ENCODE measurements at regions of chr15 and their contacts with region 1.

Region 1: DNA sequence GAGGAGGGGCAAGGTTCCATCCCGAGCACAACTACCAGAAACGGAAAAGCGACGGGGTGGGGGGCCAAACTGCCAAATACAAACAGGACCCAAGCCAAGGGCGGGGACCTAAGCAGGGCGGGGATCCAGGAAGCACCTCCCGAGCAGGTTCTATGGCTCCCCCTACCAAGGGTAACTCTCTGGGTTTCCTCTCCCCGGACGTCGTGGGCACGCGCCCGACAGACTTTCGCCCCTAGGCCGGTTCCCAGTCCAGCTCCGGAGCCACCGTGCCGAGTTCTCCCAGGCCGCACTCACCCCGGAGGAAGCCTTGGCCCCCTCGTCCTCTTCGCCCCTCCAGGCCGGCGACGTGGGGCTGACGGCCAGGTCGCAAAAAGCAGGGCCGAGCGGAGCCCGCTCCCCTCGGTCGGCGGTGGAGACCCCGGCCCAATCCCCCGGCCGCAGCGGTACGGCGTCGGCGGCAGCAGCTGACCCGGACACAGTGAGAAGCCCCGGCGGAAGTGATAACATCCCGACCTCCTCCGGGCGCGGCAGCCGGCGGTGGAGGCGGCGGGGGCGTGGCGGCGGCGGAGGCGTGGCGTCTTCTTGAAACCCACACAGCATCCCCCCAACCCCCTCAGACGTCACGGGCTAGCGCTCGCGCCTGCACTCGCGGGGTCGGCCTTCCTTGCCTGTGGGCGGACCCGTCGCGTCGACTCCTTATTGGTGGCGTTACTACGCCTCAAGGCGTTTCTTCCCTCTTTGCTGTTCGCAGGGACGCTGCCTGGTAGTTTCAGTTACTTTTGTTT is at the start of gene BNIP2:
- DNase-seq: peak; percentile 99
- H3K4me3 ChIP-seq: peak within 1 kb of the TSS; percentile 66 to 100 (median 100)
- H3K27ac ChIP-seq: peak within 1 kb of the TSS; percentile 100
- H3K4me1 ChIP-seq: peaks cover 43% of the 10 kb centered on the region
- H3K27me3 ChIP-seq: no peaks in the 10 kb centered on the region
- CTCF ChIP-seq: no peak
- POLR2A ChIP-seq: peak; percentile 90
- total RNA-seq, gene BNIP2: 90.1 and 99.2 TPM in 2 replicates

Region 2: DNA sequence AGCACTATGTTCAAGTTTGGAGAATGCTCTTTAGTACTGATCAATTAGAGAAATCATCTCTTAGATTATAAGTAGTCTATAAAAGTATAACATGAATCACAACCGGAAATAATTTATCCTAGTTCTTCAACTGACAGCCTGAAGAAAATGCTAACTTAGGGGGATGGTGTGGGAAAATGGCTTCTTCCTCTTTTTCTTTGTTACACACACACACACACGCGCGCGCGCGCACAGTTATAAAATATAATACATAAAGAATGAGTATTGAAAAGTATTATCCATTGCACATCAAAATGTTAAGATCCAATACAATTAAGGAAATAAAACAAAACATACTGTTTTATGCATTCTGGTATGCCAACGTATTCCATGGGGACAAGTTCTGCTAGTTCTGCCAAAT is 20.5 kb before region 1 on chr15:
- CTCF ChIA-PET with region 1: no interaction called
- POLR2A ChIA-PET with region 1: no interaction called
- dilution Hi-C with region 1: no loop called
- intact Hi-C with region 1: no loop called
- DNase-seq: no peak
- H3K4me3 ChIP-seq: no peak overlapping the region
- H3K27ac ChIP-seq: no peak overlapping the region
- H3K4me1 ChIP-seq: no peaks in the 10 kb centered on the region
- H3K27me3 ChIP-seq: no peaks in the 10 kb centered on the region
- CTCF ChIP-seq: no peak
- POLR2A ChIP-seq: no peak

Region 3: DNA sequence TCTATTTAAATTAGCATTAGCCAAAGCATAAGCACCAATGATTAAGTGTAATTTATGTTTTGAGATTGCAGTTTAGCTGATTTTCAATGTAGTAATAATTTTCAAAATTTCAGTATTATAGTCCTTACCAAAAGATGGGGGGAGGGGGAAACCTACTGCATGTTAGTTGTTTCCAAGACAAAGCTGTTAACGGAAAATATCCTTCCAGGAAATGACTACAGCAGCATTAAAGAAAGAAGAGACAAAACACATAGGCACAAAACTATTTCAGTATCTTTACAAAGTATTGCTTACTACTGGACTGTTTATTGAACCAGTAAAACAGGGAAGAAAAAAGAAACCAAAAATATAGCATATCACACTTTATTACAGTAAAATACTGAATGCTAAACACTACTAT is 10.4 kb before region 1 on chr15:
- CTCF ChIA-PET with region 1: interaction called, 4 read pairs
- POLR2A ChIA-PET with region 1: no interaction called
- dilution Hi-C with region 1: no loop called
- intact Hi-C with region 1: loop called (anchors 1 kb)
- DNase-seq: peak; percentile 81
- H3K4me3 ChIP-seq: peak overlapping the region in 1 of 3 experiments; percentile 37
- H3K27ac ChIP-seq: peak overlapping the region; percentile 91
- H3K4me1 ChIP-seq: peaks cover 24% of the 10 kb centered on the region
- H3K27me3 ChIP-seq: no peaks in the 10 kb centered on the region
- CTCF ChIP-seq: no peak
- POLR2A ChIP-seq: no peak

Region 4: GRCh38 chr15:59711451-59712243 is 22.6 kb after region 1 on chr15:
- CTCF ChIA-PET with region 1: interaction called, 15 read pairs
- POLR2A ChIA-PET with region 1: no interaction called
- dilution Hi-C with region 1: no loop called
- intact Hi-C with region 1: no loop called
- DNase-seq: no peak
- H3K4me3 ChIP-seq: no peak overlapping the region
- H3K27ac ChIP-seq: no peak overlapping the region
- H3K4me1 ChIP-seq: no peaks in the 10 kb centered on the region
- H3K27me3 ChIP-seq: peaks cover 0 to 4% of the 10 kb centered on the region in 2 experiments
- CTCF ChIP-seq: no peak
- POLR2A ChIP-seq: no peak

Region 5: DNA sequence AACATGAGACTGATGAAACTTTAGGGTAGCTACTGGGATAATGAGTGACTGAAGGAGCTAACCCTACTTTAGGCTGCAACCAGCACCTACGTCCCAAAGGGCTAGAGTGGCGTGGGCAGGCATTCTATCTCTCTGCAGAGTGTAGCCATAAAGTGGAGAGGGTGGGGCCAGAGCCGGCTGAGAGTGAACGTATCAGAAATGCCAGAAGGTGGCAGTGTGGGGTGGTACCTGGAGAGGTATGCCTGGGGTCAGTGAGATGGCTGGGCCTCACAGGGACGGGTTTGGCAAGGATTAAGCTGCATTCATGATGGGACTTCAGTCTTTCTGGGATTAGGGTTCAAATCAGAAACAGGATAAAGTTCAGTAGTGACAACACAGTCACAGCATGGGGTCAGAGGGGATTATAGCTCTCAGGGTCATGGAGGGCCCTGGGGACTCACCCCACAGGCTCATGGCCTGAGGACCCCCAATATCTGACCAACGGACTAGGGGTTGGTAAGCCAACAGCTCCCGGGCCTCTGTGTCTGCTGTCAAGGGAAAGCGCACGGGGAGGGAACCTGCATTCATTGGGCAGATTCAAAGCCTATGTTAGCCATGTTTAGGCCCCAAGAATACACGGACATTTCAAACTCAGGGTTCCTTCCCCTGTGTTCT is 228.6 kb after region 1 on chr15:
- CTCF ChIA-PET with region 1: interaction called, 6 read pairs
- POLR2A ChIA-PET with region 1: no interaction called
- dilution Hi-C with region 1: no loop called
- intact Hi-C with region 1: loop called (anchors 10 kb)
- DNase-seq: peak; percentile 44
- H3K4me3 ChIP-seq: no peak overlapping the region
- H3K27ac ChIP-seq: no peak overlapping the region
- H3K4me1 ChIP-seq: no peaks in the 10 kb centered on the region
- H3K27me3 ChIP-seq: peaks cover 4 to 7% of the 10 kb centered on the region in 2 experiments
- CTCF ChIP-seq: peak; percentile 44 to 57
- POLR2A ChIP-seq: no peak

Region 6: GRCh38 chr15:60179786-60180391 is 490.9 kb after region 1 on chr15:
- CTCF ChIA-PET with region 1: interaction called, 40 read pairs
- POLR2A ChIA-PET with region 1: no interaction called
- dilution Hi-C with region 1: no loop called
- intact Hi-C with region 1: loop called (anchors 1 kb)
- DNase-seq: peak; percentile 44
- H3K4me3 ChIP-seq: no peak overlapping the region
- H3K27ac ChIP-seq: no peak overlapping the region
- H3K4me1 ChIP-seq: no peaks in the 10 kb centered on the region
- H3K27me3 ChIP-seq: peaks cover 2 to 10% of the 10 kb centered on the region in 2 experiments
- CTCF ChIP-seq: peak; percentile 70 to 73
- POLR2A ChIP-seq: no peak

Region 7: DNA sequence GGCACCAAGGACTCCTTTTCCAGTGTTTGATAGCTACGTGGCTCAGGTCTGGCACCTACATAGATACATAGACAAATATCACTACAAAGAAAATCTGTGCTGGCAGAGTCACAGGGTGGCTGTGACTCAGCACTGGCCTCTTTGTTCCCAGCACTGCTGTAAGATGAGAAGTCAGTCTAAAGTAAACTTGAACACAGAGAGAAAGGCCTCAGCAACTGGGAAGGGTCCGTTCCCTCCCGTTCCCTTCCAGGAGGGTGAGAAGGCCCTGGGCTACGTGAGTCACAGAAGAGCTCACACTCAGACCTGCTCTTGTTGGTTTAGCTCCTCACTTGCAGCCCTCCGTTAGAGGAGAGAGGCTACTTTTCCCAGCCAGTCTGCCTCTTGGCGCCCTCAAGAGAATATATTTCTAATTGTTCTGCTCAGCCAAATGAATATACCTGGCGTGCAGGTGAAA is 685.6 kb after region 1 on chr15:
- CTCF ChIA-PET with region 1: no interaction called
- POLR2A ChIA-PET with region 1: no interaction called
- dilution Hi-C with region 1: no loop called
- intact Hi-C with region 1: loop called (anchors 2 kb)
- DNase-seq: peak; percentile 98
- H3K4me3 ChIP-seq: no peak overlapping the region
- H3K27ac ChIP-seq: peak overlapping the region; percentile 98
- H3K4me1 ChIP-seq: peaks cover 85% of the 10 kb centered on the region
- H3K27me3 ChIP-seq: no peaks in the 10 kb centered on the region
- CTCF ChIP-seq: no peak
- POLR2A ChIP-seq: peak; percentile 72

Region 8: DNA sequence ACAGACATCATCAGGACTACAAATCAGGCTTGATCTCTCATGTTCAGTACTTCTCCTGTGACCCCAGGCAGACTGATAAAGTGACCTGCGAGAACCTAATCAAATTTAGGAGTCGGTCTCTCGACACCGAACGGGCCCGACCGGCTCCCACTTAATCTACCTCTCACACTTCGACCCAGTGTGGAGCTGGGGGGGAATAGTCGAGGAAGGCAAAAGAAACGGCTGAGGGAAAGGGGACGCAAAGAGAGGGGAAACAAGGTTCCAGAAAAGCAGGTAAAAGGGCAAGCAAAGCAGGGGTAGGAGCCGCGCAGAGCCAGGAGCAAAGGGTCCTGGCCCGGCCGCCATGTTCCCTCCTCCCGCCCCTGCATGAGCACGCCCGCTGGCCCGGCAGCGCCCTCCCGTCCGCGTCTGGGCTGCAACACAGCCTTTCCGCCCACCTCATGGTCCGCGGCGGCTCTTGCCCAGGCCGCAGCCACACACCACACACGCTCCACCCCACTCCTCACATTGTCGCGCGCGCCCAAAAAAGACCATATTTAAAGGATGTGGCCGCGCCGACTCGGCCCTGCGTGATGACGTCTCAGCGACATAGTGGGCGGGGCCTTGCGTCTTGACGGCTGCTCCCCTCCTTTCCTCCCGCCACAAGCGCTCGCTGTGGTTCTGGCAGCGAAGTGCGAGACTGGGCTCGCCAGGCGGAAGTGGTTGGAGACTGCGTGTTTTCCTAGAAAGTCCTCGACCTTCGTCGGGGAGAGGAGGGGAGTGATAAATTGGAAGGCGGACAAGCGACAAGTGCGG is 789.7 kb after region 1 on chr15 and contains the start of gene ICE2:
- CTCF ChIA-PET with region 1: no interaction called
- POLR2A ChIA-PET with region 1: no interaction called
- dilution Hi-C with region 1: no loop called
- intact Hi-C with region 1: loop called (anchors 5 kb)
- DNase-seq: peak; percentile 97
- H3K4me3 ChIP-seq: peak within 1 kb of the TSS; percentile 69 to 94 (median 77)
- H3K27ac ChIP-seq: peak within 1 kb of the TSS; percentile 89
- H3K4me1 ChIP-seq: peaks cover 26% of the 10 kb centered on the region
- H3K27me3 ChIP-seq: no peaks in the 10 kb centered on the region
- CTCF ChIP-seq: no peak
- POLR2A ChIP-seq: peak; percentile 98
- total RNA-seq, gene ICE2: 50.9 and 57.0 TPM in 2 replicates